A549 (cell line): ENCODE measurements at regions of chr10 and their contacts with region 1.

Region 1: DNA sequence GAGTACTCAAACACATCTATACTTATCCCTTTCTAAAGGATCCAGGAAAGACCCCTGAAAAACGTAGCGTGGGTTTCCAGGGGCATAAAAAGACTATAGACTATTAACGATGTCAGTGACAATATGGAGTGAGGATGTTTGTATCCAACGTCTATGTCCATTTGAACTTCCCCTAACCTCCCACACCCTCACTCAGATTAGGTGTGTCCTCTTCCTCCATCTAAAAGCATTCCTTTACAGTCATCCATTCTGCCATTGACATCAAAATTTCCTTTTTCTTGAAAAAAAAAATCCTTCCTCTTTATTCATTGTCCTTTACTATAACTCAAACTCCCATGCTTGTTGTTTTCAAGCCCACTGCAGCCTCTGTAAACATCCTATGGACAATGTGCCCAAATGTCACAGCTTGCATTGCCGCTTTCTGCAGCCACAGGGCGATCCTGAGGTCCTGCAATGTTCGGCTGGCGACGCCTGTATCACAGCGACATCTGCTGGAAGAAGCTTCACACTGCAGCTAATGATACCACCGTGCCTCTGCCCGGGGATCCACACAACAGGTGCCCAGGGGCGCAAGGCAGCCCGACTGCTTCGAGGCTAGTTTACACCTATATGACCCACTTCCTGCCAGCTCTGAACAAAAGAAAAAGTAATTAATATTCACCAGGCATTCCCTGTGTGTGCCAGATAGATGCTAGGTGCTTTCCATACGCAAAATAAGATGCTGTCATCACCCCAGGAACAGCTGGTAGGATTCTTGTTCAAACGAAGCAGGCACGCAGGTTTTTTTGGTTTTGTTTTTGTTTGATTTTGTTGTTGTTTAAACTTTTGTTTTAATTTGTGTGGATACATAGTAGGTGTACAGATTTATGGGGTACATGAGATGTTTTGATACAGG is 267.9 kb upstream of the GHITM start:
- DNase-seq: peak; percentile 38 to 69
- ATAC-seq: peak; percentile 94 to 99
- H3K4me3 ChIP-seq: no peak overlapping the region
- H3K27ac ChIP-seq: no peak overlapping the region
- H3K4me1 ChIP-seq: no peaks in the 10 kb centered on the region
- CTCF ChIP-seq: peak; percentile 53
- EP300 ChIP-seq: no peak
- POLR2A ChIP-seq: no peak
- RAD21 ChIP-seq: peak; percentile 78 to 92

Region 2: GRCh38 chr10:82796510-82796909 is 1074.9 kb before region 1 on chr10:
- CTCF ChIA-PET with region 1: interaction called, 11 read pairs
- POLR2A ChIA-PET with region 1: no interaction called
- DNase-seq: no peak
- ATAC-seq: no peak
- H3K4me3 ChIP-seq: no peak overlapping the region
- H3K27ac ChIP-seq: no peak overlapping the region
- H3K4me1 ChIP-seq: no peaks in the 10 kb centered on the region
- CTCF ChIP-seq: peak; percentile 25; the same call in 2 of the 3 replicates
- EP300 ChIP-seq: no peak
- POLR2A ChIP-seq: no peak
- RAD21 ChIP-seq: peak; percentile 32 to 39; a peak in 4 of 5 replicates

Region 3: GRCh38 chr10:83849135-83849534 is 22.3 kb before region 1 on chr10:
- CTCF ChIA-PET with region 1: no interaction called
- POLR2A ChIA-PET with region 1: no interaction called
- DNase-seq: no peak
- ATAC-seq: no peak
- H3K4me3 ChIP-seq: no peak overlapping the region
- H3K27ac ChIP-seq: no peak overlapping the region
- H3K4me1 ChIP-seq: no peaks in the 10 kb centered on the region
- CTCF ChIP-seq: no peak
- EP300 ChIP-seq: no peak
- POLR2A ChIP-seq: no peak
- RAD21 ChIP-seq: no peak

Region 4: DNA sequence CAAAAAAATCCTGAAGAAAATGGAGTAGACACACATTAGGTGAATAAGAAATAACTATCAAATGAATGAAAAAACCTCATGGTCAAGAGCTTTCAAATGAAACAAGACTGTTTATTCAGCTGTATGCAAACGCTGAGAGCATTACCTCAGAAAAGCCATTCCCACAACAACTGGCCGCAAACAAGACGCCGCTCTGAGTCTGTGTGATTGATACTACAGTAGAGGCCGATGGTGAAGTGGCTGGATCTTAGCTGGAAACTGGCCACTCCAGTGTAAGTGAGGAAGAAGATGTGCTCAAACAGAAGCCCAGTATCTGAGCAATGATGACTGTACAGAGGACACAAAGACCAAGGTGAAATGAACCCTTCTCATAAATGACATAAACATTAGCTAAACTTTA is 15.4 kb after region 1 on chr10:
- CTCF ChIA-PET with region 1: interaction called, 10 read pairs
- POLR2A ChIA-PET with region 1: no interaction called
- DNase-seq: no peak
- ATAC-seq: no peak
- H3K4me3 ChIP-seq: no peak overlapping the region
- H3K27ac ChIP-seq: no peak overlapping the region
- H3K4me1 ChIP-seq: no peaks in the 10 kb centered on the region
- CTCF ChIP-seq: no peak
- EP300 ChIP-seq: no peak
- POLR2A ChIP-seq: no peak
- RAD21 ChIP-seq: no peak